Activated T-helper 1 cell treated with anti-CD3 and anti-CD28 coated beads, Interleukin-12 subunit alpha, Interleukin-12 subunit beta, Interleukin-2, Interleukin-4 antibody, amounts not matched to agents 30 ng/mL and 10 ng/mL and 1 ng/mL, durations not matched to agents 14 hours and 24 hours and 36 hours (primary cell): ENCODE measurements at regions of chr18 and their contacts with region 1.

Region 1: DNA sequence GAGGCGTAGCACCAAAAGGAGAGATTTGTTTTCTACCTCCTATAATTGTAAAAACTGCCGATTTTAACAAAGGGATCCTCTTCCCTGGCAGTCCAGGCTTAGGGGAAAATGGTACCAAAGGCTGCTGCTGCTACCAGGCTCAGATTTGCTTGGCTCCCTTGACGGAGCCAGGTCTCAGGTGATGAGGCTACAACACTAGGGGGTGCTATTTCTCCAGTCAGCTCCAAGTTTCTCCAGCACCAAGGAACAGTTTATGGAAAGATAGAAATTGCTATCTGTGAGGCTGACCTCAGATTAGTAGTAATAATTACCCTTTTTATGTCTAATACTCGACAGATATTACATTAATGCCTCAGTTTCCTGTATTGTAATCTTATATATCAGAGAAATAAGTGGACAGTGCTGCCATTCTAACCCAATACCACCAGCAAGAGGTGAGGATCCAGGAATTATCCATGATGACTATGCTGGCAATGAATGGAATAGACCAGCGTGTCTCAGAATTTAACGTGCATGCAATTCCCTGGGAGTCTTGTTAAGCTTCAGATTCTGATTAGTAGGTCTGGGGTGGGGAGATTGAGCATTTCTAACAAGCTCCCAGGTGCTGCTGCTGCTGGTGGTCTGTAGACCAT is 111.3 kb downstream of the ESCO1 start:
- DNase-seq: no peak
- H3K4me3 Mint-ChIP-seq: no peak overlapping the region
- H3K27ac Mint-ChIP-seq: no peak overlapping the region
- H3K4me1 Mint-ChIP-seq: no peaks in the 10 kb centered on the region
- H3K27me3 Mint-ChIP-seq: no peaks in the 10 kb centered on the region

Region 2: GRCh38 chr18:21851327-21851972 is 362.2 kb after region 1 on chr18:
- intact Hi-C with region 1: loop called (anchors 5 kb)
- DNase-seq: no peak
- H3K4me3 Mint-ChIP-seq: no peak overlapping the region
- H3K27ac Mint-ChIP-seq: no peak overlapping the region
- H3K4me1 Mint-ChIP-seq: peaks cover 12% of the 10 kb centered on the region
- H3K27me3 Mint-ChIP-seq: no peaks in the 10 kb centered on the region